Right cardiac atrium (tissue), 5 donors: ENCODE measurements at regions of chr14 and their contacts with region 1.

Region 1: GRCh38 chr14:58166005-58166983 is 14.3 kb upstream of the ARMH4 start:
- DNase-seq: peak; percentile 85 to 94 (median 93)
- ATAC-seq: peak; percentile 78 to 81
- H3K4me3 ChIP-seq: no peak overlapping the region
- H3K27ac ChIP-seq: no peak overlapping the region
- H3K4me1 ChIP-seq: peaks cover 2% of the 10 kb centered on the region
- H3K27me3 ChIP-seq: no peaks in the 10 kb centered on the region

Region 2: GRCh38 chr14:58107947-58108552 is 58.2 kb before region 1 on chr14:
- intact Hi-C with region 1: loop called (anchors 2 to 10 kb)
- DNase-seq: peak in 2 of 3 donors; percentile 31 to 40
- ATAC-seq: peak in 1 of 2 donors; percentile 57
- H3K4me3 ChIP-seq: no peak overlapping the region
- H3K27ac ChIP-seq: no peak overlapping the region
- H3K4me1 ChIP-seq: peaks cover 2% of the 10 kb centered on the region
- H3K27me3 ChIP-seq: no peaks in the 10 kb centered on the region

Region 3: GRCh38 chr14:58118097-58118815 is 48.0 kb before region 1 on chr14:
- intact Hi-C with region 1: loop called in 1 of 4 experiments (anchors 10 kb)
- DNase-seq: no peak
- ATAC-seq: no peak
- H3K4me3 ChIP-seq: no peak overlapping the region
- H3K27ac ChIP-seq: no peak overlapping the region
- H3K4me1 ChIP-seq: no peaks in the 10 kb centered on the region
- H3K27me3 ChIP-seq: no peaks in the 10 kb centered on the region